ENCODE measurements at regions of chr2 and their contacts with region 1.

Region 1: DNA sequence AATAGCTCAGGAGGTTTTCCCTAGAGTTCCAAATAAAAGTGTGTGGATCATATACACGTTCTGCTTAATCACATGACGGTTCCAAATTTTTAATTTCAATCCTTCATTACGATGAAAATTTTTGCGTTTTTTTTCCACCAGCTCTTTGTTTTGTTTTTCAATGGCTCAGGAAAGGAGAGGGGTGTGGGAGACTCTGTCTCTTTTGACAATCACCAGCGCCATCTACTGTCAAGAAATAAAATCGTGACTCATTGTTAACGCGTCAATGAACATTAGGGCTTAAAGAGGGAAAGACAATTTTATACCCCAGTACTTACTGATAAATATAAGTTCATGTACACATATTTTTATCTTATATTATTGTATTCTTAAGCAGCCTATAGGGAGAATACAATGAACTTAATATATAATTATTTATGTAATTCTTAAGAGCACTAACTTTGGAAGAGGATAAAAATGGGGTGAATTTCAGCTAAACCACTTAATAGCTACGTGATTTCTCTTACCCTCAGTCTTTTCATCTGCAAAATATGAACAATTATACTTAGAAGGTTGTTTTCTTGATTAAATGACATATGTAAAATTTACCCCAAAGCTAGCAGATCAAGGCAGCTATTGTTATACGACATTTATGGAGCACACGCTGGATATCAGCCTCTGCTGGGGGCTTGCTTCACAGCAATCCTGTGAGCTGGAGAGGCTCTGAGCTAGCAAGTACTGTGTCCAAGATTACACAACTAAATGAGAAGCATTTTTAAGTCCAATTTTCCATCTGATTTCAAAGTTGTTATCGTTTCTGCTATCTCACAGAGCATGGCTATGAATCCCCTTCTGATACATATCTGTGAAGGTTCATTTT is 47.4 kb upstream of the RMDN2 start:
- DNase-seq: peak; percentile 37
- ATAC-seq: no peak
- H3K4me3 Mint-ChIP-seq: no peak overlapping the region
- H3K27ac Mint-ChIP-seq: no peak overlapping the region
- H3K4me1 Mint-ChIP-seq: peaks cover 11% of the 10 kb centered on the region
- H3K27me3 Mint-ChIP-seq: peaks cover 18% of the 10 kb centered on the region

Region 2: DNA sequence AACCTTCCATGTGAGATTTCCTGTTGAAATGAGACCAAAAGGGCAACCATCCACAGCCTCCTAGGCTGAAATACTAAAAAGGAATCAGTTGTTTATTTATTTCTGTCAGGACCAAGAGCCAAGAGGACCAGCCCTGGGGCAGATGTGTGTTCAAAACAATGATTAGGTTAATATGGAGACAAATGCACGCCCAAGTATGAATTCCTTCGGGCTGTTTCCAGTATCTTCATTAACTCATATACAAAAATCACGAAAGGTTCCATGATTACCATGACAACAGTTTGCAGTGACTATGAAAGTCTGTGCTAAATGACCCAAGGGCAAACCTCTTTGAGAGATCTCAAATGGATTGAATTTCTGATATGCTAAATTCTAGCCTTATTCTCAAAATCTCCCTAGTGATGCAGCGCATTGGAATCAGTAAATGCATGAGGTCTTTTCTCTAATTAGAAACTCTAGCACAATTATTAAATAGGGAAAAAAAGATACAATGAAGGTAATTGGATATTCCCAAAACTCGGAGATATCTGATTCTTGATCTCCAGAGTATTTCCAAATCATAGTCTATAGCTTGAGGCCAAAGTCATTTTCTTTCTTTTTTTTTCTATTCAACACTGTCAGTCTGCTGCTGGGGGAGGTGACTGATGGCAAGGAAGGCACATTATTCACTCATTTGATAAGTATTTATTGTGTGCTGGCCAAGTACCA is 1145.6 kb before region 1 on chr2:
- CTCF ChIA-PET with region 1: no interaction called
- POLR2A ChIA-PET with region 1: no interaction called
- intact Hi-C with region 1: no loop called
- DNase-seq: no peak
- ATAC-seq: no peak
- H3K4me3 Mint-ChIP-seq: no peak overlapping the region
- H3K27ac Mint-ChIP-seq: no peak overlapping the region
- H3K4me1 Mint-ChIP-seq: no peaks in the 10 kb centered on the region
- H3K27me3 Mint-ChIP-seq: peaks cover 1% of the 10 kb centered on the region

Region 3: DNA sequence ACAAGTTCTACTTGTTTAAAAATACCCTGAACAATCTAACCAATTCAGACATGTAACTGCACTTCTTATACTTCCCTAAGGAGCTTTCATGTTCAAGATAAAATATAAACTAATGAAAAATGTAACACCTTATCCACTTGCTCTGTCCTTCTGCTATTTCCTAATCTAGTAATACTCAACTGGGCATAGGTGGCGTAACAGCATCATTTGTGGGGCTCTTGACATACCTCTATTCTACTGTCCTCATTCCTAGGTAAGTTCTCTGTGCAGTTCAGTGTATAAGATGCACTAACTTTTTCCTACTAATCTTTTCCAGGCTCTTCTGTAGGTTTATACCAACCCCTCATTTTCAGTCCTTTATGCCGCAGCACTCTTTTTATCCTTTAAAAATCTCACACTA is 589.7 kb before region 1 on chr2:
- CTCF ChIA-PET with region 1: no interaction called
- POLR2A ChIA-PET with region 1: no interaction called
- intact Hi-C with region 1: loop called in 1 of 2 experiments (anchors 5 kb)
- DNase-seq: peak; percentile 43
- ATAC-seq: peak; percentile 68
- H3K4me3 Mint-ChIP-seq: no peak overlapping the region
- H3K27ac Mint-ChIP-seq: no peak overlapping the region
- H3K4me1 Mint-ChIP-seq: no peaks in the 10 kb centered on the region
- H3K27me3 Mint-ChIP-seq: no peaks in the 10 kb centered on the region

Region 4: GRCh38 chr2:37414470-37414949 is 463.2 kb before region 1 on chr2:
- CTCF ChIA-PET with region 1: interaction called, 129 read pairs
- POLR2A ChIA-PET with region 1: no interaction called
- intact Hi-C with region 1: loop called (anchors 1 kb)
- DNase-seq: no peak
- ATAC-seq: peak; percentile 60
- H3K4me3 Mint-ChIP-seq: no peak overlapping the region
- H3K27ac Mint-ChIP-seq: no peak overlapping the region
- H3K4me1 Mint-ChIP-seq: peaks cover 7% of the 10 kb centered on the region
- H3K27me3 Mint-ChIP-seq: no peaks in the 10 kb centered on the region

Region 5: GRCh38 chr2:37623971-37624900 is 253.4 kb before region 1 on chr2:
- CTCF ChIA-PET with region 1: interaction called, 10 read pairs
- POLR2A ChIA-PET with region 1: no interaction called
- intact Hi-C with region 1: loop called in 1 of 2 experiments (anchors 5 kb)
- DNase-seq: peak; percentile 45
- ATAC-seq: peak; percentile 78
- H3K4me3 Mint-ChIP-seq: peak overlapping the region; percentile 48
- H3K27ac Mint-ChIP-seq: peak overlapping the region; percentile 85
- H3K4me1 Mint-ChIP-seq: peaks cover 76% of the 10 kb centered on the region
- H3K27me3 Mint-ChIP-seq: no peaks in the 10 kb centered on the region

Region 6: DNA sequence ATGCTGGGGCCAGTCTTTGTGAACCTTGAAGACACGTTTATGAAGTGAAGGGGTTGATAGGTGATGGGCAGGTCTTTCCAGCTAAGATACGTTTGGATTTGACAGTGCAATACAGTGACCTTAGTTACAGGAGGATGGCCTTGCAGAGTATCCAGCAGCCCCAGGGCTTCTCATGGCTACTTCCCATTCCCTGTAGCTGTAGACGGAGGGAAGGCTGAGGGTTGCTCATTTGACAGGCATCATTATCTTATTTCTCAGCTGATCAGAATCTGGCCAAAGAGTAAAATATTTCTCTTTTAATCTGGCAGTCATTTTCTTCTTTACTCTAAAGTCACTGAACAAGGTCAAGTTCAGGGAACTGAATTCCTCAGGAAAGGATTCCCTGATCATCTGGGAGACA is 37.7 kb before region 1 on chr2:
- CTCF ChIA-PET with region 1: interaction called, 10 read pairs
- POLR2A ChIA-PET with region 1: no interaction called
- intact Hi-C with region 1: no loop called
- DNase-seq: no peak
- ATAC-seq: no peak
- H3K4me3 Mint-ChIP-seq: no peak overlapping the region
- H3K27ac Mint-ChIP-seq: no peak overlapping the region
- H3K4me1 Mint-ChIP-seq: no peaks in the 10 kb centered on the region
- H3K27me3 Mint-ChIP-seq: peaks cover 9% of the 10 kb centered on the region

Measured in activated CD4-positive, alpha-beta T cell treated with anti-CD3 and anti-CD28 coated beads for 36 hours (primary cell).